ENCODE measurements at regions of chr1 and their contacts with region 1.

Region 1: GRCh38 chr1:8525558-8526275 is 207.8 kb downstream of the SLC45A1 start:
- DNase-seq: peak; percentile 75 to 98 (median 86)

Region 2: DNA sequence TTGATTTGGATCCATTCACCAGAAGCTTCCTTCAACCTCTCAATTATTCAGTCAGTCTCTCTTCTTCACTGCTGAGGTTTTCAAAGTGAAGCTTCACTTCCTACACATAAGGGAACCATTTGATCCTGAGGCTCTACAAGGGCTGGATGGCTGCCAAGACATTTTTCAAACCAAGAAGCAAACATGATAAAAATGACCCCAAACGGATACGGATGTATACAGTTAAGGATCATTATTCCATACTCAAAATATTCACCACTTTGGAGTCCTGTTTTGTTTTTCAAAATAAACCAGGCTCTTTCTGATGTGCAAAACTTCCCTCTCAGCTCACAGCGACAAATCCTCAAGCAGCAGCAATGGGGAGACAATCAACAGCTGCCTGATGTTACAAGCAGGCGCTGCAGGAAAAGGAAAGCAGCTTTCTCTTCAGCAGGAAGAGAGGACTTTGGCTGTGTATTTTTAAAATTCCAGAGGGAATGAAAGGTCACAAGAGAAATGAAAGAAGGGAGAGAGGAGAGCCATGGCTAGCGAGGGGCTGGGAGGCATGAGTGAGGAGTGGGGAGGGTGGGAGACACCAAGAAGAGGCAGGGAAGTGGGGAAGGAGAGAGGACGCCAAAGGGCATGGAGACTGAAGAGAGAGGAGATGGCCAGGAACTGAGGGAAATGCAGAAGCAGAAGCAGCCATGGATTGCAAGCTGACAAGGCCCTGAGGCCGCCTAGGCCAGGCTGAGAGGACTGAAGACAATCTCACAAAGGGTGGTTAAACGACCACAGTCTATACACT is 62.4 kb before region 1 on chr1:
- intact Hi-C with region 1: loop called (anchors 10 kb)
- DNase-seq: no peak

Region 3: GRCh38 chr1:8746554-8746953 is 220.8 kb after region 1 on chr1:
- intact Hi-C with region 1: no loop called
- DNase-seq: no peak

Measured in posterior cingulate gyrus (tissue), 11 donors.